MCF 10A (cell line): ENCODE measurements at regions of chr13 and their contacts with region 1.

Region 1: GRCh38 chr13:99200432-99201167 is at the start of gene UBAC2:
- DNase-seq: peak; percentile 96
- H3K4me3 Mint-ChIP-seq: peak within 1 kb of the TSS; percentile 94
- H3K27ac Mint-ChIP-seq: peak within 1 kb of the TSS; percentile 97
- H3K4me1 Mint-ChIP-seq: peaks cover 38% of the 10 kb centered on the region
- H3K27me3 Mint-ChIP-seq: no peaks in the 10 kb centered on the region
- CTCF ChIP-seq: no peak
- total RNA-seq, gene UBAC2: 74.7 and 78.3 TPM in 2 replicates

Region 2: DNA sequence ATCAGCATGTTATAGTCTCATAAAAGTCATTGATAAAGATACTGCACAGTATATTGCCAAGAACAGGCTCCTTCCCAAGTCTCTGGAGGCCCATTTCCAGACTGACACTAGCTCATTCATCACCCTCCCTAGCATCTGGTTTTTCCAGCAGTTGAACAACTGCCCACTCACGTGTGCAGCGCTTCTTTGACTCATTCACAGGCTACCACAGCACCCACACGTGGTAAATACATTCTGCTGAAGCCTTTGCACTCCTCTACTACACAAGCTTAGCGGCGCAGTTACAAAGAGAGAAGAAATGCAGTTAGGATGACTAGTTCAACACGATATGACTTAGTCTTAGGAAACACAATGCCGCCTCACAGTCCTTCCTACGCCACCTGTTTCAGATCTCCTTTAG is 310.4 kb before region 1 on chr13:
- CTCF ChIA-PET with region 1: no interaction called
- POLR2A ChIA-PET with region 1: no interaction called
- intact Hi-C with region 1: loop called (anchors 2 kb)
- DNase-seq: peak; percentile 85
- H3K4me3 Mint-ChIP-seq: no peak overlapping the region
- H3K27ac Mint-ChIP-seq: peak overlapping the region; percentile 71
- H3K4me1 Mint-ChIP-seq: peaks cover 19% of the 10 kb centered on the region
- H3K27me3 Mint-ChIP-seq: no peaks in the 10 kb centered on the region
- CTCF ChIP-seq: no peak

Region 3: GRCh38 chr13:99057310-99057975 is 143.2 kb before region 1 on chr13:
- CTCF ChIA-PET with region 1: interaction called, 4 read pairs
- POLR2A ChIA-PET with region 1: interaction called, 23 read pairs
- intact Hi-C with region 1: no loop called
- DNase-seq: peak; percentile 89
- H3K4me3 Mint-ChIP-seq: no peak overlapping the region
- H3K27ac Mint-ChIP-seq: peak overlapping the region; percentile 59
- H3K4me1 Mint-ChIP-seq: peaks cover 47% of the 10 kb centered on the region
- H3K27me3 Mint-ChIP-seq: no peaks in the 10 kb centered on the region
- CTCF ChIP-seq: no peak

Region 4: GRCh38 chr13:99124794-99125316 is 75.7 kb before region 1 on chr13:
- CTCF ChIA-PET with region 1: no interaction called
- POLR2A ChIA-PET with region 1: interaction called, 8 read pairs
- intact Hi-C with region 1: loop called (anchors 2 kb)
- DNase-seq: peak; percentile 84
- H3K4me3 Mint-ChIP-seq: peak overlapping the region; percentile 67
- H3K27ac Mint-ChIP-seq: peak overlapping the region; percentile 44
- H3K4me1 Mint-ChIP-seq: peaks cover 34% of the 10 kb centered on the region
- H3K27me3 Mint-ChIP-seq: no peaks in the 10 kb centered on the region
- CTCF ChIP-seq: no peak

Region 5: GRCh38 chr13:99176309-99177276 is 24.0 kb before region 1 on chr13:
- CTCF ChIA-PET with region 1: interaction called, 23 read pairs
- POLR2A ChIA-PET with region 1: interaction called, 61 read pairs
- intact Hi-C with region 1: no loop called
- DNase-seq: peak; percentile 77
- H3K4me3 Mint-ChIP-seq: no peak overlapping the region
- H3K27ac Mint-ChIP-seq: no peak overlapping the region
- H3K4me1 Mint-ChIP-seq: peaks cover 6% of the 10 kb centered on the region
- H3K27me3 Mint-ChIP-seq: no peaks in the 10 kb centered on the region
- CTCF ChIP-seq: peak; percentile 91

Region 6: DNA sequence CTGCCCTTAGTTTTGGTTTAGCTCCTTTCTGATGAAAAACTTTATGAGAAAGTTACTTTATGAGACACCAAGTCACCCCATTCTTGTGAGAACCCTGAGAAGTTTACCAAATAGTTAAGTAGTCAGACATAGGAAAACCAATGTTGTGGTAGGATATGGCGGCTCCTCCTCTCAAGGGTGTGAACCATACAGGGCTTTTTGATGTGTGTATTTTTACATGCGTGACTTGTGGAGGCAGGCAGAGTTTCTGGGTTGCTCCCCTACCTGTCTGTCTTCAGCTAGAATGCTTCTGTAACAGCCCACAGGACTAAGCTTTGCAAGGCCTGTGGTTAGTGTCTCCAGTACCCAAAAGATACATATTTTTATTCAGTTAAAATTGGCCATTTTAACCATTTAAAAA is 18.4 kb after region 1 on chr13:
- CTCF ChIA-PET with region 1: interaction called, 5 read pairs
- POLR2A ChIA-PET with region 1: interaction called, 14 read pairs
- intact Hi-C with region 1: no loop called
- DNase-seq: no peak
- H3K4me3 Mint-ChIP-seq: no peak overlapping the region
- H3K27ac Mint-ChIP-seq: no peak overlapping the region
- H3K4me1 Mint-ChIP-seq: peaks cover 16% of the 10 kb centered on the region
- H3K27me3 Mint-ChIP-seq: no peaks in the 10 kb centered on the region
- CTCF ChIP-seq: no peak

Region 7: DNA sequence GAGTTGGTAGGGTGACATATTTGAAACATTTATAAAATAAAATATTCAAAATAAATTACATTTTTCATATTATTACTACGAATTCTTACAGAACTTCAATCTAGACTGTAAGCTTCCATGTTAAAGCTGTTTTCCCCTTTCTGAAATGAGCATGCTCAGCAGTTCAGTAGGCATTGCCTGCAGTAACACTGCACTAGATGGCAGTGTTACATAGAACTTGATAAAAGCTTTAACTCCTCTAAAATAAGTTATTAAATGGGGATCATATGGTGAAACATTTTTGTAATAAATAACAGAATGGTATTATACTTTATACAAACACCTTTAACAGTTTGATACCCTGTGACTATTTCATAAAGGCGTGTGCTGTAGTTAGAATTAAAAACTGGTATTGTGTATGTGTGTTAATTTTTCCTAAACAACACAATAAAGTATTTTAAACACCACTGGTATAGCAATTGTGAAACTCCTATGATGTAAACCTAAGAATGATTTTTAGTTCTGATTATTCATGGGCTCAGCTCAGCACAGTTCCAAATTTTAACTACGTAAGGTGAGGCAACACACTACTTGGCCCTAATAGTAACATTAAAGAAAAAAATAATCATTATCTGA is 69.1 kb after region 1 on chr13:
- CTCF ChIA-PET with region 1: interaction called, 15 read pairs
- POLR2A ChIA-PET with region 1: interaction called, 7 read pairs
- intact Hi-C with region 1: loop called (anchors 5 kb)
- DNase-seq: peak; percentile 54
- H3K4me3 Mint-ChIP-seq: no peak overlapping the region
- H3K27ac Mint-ChIP-seq: no peak overlapping the region
- H3K4me1 Mint-ChIP-seq: no peaks in the 10 kb centered on the region
- H3K27me3 Mint-ChIP-seq: no peaks in the 10 kb centered on the region
- CTCF ChIP-seq: peak; percentile 43

Region 8: GRCh38 chr13:100100115-100100879 is 899.7 kb after region 1 on chr13:
- CTCF ChIA-PET with region 1: no interaction called
- POLR2A ChIA-PET with region 1: no interaction called
- intact Hi-C with region 1: no loop called
- DNase-seq: peak; percentile 78
- H3K4me3 Mint-ChIP-seq: peak overlapping the region; percentile 57
- H3K27ac Mint-ChIP-seq: peak overlapping the region; percentile 95
- H3K4me1 Mint-ChIP-seq: peaks cover 30% of the 10 kb centered on the region
- H3K27me3 Mint-ChIP-seq: no peaks in the 10 kb centered on the region
- CTCF ChIP-seq: no peak